B cell (primary cell): ENCODE measurements at regions of chr10 and their contacts with region 1.

Region 1: GRCh38 chr10:88064608-88065382 is 201.4 kb downstream of the PTEN start:
- DNase-seq: no peak
- ATAC-seq: no peak
- H3K4me3 ChIP-seq: no peak overlapping the region
- H3K4me3 Mint-ChIP-seq: no peak overlapping the region
- H3K27ac ChIP-seq: no peak overlapping the region
- H3K27ac Mint-ChIP-seq: no peak overlapping the region
- H3K4me1 ChIP-seq: peaks cover 87 to 91% of the 10 kb centered on the region in 2 donors
- H3K4me1 Mint-ChIP-seq: peaks cover 76% of the 10 kb centered on the region
- H3K27me3 ChIP-seq: no peaks in the 10 kb centered on the region
- H3K27me3 Mint-ChIP-seq: no peaks in the 10 kb centered on the region
- CTCF ChIP-seq: no peak

Region 2: GRCh38 chr10:88091490-88092105 is 26.8 kb after region 1 on chr10:
- CTCF ChIA-PET with region 1: interaction called, 11 read pairs
- POLR2A ChIA-PET with region 1: no interaction called
- intact Hi-C with region 1: no loop called
- DNase-seq: peak; percentile 81
- ATAC-seq: peak; percentile 86
- H3K4me3 ChIP-seq: no peak overlapping the region
- H3K4me3 Mint-ChIP-seq: no peak overlapping the region
- H3K27ac ChIP-seq: peak overlapping the region; percentile 39 to 57
- H3K27ac Mint-ChIP-seq: peak overlapping the region; percentile 79
- H3K4me1 ChIP-seq: peaks cover 28 to 29% of the 10 kb centered on the region in 2 donors
- H3K4me1 Mint-ChIP-seq: peaks cover 37% of the 10 kb centered on the region
- H3K27me3 ChIP-seq: no peaks in the 10 kb centered on the region
- H3K27me3 Mint-ChIP-seq: no peaks in the 10 kb centered on the region
- CTCF ChIP-seq: no peak